Ascending aorta (tissue), 2 donors: ENCODE measurements at regions of chr19 and their contacts with region 1.

Region 1: GRCh38 chr19:52369559-52370340 is at the start of gene ZNF880:
- DNase-seq: peak; percentile 55 to 95
- H3K4me3 ChIP-seq: peak within 1 kb of the TSS; percentile 78 to 94
- H3K27ac ChIP-seq: peak within 1 kb of the TSS; percentile 97 to 100
- H3K4me1 ChIP-seq: peaks cover 0 to 4% of the 10 kb centered on the region in 2 donors
- H3K27me3 ChIP-seq: no peaks in the 10 kb centered on the region
- CTCF ChIP-seq: peak in 2 of 3 experiments; percentile 7 to 13
- total RNA-seq, gene ZNF880: 21.5 TPM

Region 2: DNA sequence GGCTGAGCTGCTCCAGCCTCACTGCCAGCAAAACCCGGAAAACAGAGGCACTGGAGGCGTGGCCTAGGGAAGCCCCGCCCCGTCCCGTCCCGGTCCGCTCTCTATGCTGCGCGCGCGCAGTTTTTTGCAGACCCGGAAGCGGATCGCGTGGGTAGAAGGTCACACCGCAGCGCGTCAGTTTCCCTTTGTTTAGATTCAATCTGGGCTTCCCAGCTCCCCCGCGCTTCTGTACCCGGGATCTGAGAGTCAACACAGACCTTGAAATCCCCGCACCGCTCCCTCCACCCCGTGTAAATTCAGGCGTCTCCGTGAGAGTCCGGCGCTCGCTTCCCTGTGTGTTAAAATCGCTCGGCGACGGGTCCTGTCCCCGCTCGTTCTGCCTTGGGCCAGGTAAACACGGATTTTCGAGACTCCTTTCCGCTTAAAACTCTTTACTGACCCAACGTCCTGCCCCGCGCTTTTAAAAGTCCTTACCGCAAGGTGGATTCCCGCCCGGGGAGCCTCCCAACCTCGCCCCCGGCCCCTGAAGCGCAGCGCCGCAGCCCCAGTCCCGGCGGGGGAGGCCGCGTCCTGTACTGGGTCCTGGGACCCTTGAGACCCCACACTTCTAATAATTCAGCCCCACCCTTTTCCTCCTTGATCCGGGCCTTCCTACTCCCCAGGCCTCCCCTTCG is 33.5 kb before region 1 on chr19 and contains the start of gene ZNF610:
- intact Hi-C with region 1: loop called (anchors 2 kb)
- DNase-seq: peak; percentile 46 to 92
- H3K4me3 ChIP-seq: peak within 1 kb of the TSS; percentile 67
- H3K27ac ChIP-seq: peak within 1 kb of the TSS; percentile 67 to 84
- H3K4me1 ChIP-seq: peaks cover 0 to 4% of the 10 kb centered on the region in 2 donors
- H3K27me3 ChIP-seq: no peaks in the 10 kb centered on the region
- CTCF ChIP-seq: no peak
- total RNA-seq, gene ZNF610: not detected